Activated naive CD4-positive, alpha-beta T cell treated with anti-CD3 and anti-CD28 coated beads for 36 hours (primary cell): ENCODE measurements at regions of chr7 and their contacts with region 1.

Region 1: GRCh38 chr7:106285051-106285854 is 470 bp upstream of the NAMPT start:
- DNase-seq: peak; percentile 100
- H3K4me3 Mint-ChIP-seq: peak overlapping the region; percentile 92
- H3K27ac Mint-ChIP-seq: peak overlapping the region; percentile 99
- H3K4me1 Mint-ChIP-seq: peaks cover 45% of the 10 kb centered on the region
- H3K27me3 Mint-ChIP-seq: peaks cover under 1% of the 10 kb centered on the region

Region 2: DNA sequence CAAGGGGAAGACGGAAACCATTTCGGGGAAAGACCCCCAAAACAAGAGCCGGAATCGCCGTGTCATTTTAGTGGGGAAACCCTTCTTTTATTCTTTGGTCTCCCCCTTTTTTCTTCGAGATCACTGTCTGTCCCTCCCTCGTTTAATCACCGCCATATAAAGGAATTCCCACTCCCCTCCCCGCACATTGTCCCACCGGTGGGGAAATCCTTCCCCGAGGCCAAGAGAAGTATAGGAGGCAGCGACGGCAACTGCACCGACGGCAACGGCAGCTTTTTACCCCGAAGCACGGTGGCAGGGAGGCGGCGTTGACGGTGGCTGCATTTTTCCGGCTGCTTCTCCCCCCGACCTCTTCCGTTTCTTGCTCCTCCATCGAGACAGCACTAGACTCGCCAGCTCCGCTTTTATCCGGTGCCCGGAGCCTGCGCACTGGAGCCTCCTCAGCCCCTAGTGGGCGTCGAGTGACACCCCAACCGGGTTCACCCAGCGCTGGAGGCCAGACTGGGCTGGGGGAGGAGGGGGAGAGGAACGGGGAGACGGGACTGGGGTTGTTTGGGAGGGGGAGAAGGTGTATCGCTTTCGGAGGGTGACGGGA is 1271.9 kb before region 1 on chr7:
- CTCF ChIA-PET with region 1: no interaction called
- intact Hi-C with region 1: loop called (anchors 1 kb)
- DNase-seq: peak; percentile 94
- H3K4me3 Mint-ChIP-seq: peak overlapping the region; percentile 95
- H3K27ac Mint-ChIP-seq: peak overlapping the region; percentile 99
- H3K4me1 Mint-ChIP-seq: peaks cover 25% of the 10 kb centered on the region
- H3K27me3 Mint-ChIP-seq: no peaks in the 10 kb centered on the region

Region 3: DNA sequence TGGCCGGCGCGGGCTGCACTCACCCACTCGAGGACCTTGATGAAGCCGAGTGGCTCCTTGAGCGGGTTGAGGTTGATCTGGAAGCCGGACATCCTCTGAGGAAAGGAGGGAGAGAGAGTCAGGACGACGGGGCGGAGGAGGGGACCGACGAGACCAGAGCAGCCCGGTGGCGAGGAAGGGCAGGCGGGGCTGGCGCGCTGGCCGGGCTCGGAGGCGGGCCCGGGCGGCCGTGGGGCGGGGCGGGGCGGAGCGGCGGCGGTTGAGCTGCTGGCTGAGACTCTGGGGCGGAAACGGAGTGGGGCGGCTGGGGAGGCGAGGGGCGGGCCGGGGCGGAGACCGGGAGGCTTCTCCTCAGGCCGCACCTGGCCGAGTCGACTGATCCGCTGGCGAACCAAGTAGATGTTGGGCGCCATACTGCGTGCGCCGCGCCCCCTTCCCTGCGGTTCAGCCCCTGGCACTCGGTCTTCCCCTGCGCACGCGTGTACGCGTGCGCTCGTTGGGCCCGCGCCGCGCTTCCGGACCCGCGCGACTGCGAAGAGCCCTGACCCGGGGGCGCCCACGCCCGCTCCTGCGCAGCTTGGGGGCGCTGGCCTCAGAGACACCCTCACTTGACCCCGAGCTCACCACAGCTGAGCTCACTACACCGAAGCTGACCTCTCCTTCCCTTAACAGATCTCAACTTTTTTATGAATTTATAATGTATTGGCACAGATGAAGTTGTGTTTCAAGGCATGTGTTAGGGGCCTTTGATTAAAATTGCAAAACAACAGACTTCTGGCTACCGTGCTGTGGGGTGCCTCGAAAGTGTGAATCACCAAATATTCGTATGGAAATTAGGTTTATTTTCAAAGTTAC is 172.9 kb before region 1 on chr7 and contains the start of gene SYPL1:
- CTCF ChIA-PET with region 1: no interaction called
- intact Hi-C with region 1: loop called (anchors 1 kb)
- DNase-seq: peak; percentile 94
- H3K4me3 Mint-ChIP-seq: peak within 1 kb of the TSS; percentile 85
- H3K27ac Mint-ChIP-seq: peak within 1 kb of the TSS; percentile 92
- H3K4me1 Mint-ChIP-seq: peaks cover 71% of the 10 kb centered on the region
- H3K27me3 Mint-ChIP-seq: no peaks in the 10 kb centered on the region
- total RNA-seq, gene SYPL1: 24.7 to 26.6 TPM

Region 4: GRCh38 chr7:106126170-106126938 is 158.9 kb before region 1 on chr7:
- CTCF ChIA-PET with region 1: no interaction called
- intact Hi-C with region 1: no loop called
- DNase-seq: peak; percentile 85
- H3K4me3 Mint-ChIP-seq: peak overlapping the region; percentile 68
- H3K27ac Mint-ChIP-seq: peak overlapping the region; percentile 20
- H3K4me1 Mint-ChIP-seq: peaks cover 18% of the 10 kb centered on the region
- H3K27me3 Mint-ChIP-seq: no peaks in the 10 kb centered on the region

Region 5: DNA sequence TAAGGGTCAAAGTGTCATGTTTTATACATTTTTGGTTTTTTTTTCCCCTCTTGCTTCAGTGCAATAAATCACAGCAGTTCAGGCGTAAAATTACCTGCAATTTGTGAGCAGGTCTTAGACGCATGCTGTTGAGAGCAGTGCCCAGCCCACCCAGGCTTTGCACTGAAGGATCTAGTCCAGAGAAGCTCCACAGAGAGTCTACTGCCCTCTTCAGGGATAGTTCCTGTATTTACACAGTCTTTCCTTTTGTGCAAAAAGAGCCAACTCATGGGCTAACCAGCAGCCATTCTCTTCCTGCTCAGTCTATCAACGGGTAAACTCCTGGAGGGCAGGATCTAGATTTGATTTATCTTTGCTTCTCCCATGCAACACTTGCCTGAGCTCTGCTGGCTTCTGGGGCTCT is 81.8 kb after region 1 on chr7:
- CTCF ChIA-PET with region 1: interaction called, 4 read pairs
- intact Hi-C with region 1: loop called (anchors 1 kb)
- DNase-seq: no peak
- H3K4me3 Mint-ChIP-seq: no peak overlapping the region
- H3K27ac Mint-ChIP-seq: peak overlapping the region; percentile 70
- H3K4me1 Mint-ChIP-seq: peaks cover 44% of the 10 kb centered on the region
- H3K27me3 Mint-ChIP-seq: peaks cover 23% of the 10 kb centered on the region

Region 6: DNA sequence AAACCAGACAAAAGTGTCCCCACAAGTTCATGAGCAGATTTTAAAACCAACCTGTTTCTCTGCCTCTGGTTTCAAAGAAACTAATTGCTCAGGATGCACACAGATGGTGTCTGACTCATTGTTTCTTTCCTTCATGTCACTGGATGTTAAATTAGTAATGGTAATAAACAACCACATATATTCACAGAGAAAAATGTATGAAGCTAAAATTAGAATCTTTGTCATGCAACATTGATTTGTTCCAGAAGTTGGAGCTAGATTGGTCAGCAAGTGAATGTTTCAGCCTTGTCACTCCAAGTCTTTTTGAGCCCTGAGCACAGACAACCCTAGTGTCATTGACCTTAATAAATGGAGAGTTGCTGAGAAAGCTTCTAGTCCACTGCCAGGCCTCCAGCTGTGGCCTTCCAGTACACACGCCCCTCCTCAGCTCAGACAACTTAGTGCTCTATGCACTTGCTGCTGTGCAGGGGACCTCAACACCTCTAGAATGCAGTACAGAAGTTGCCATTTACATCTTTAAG is 199.8 kb after region 1 on chr7:
- CTCF ChIA-PET with region 1: interaction called, 3 read pairs
- intact Hi-C with region 1: loop called (anchors 1 kb)
- DNase-seq: peak; percentile 26
- H3K4me3 Mint-ChIP-seq: no peak overlapping the region
- H3K27ac Mint-ChIP-seq: peak overlapping the region; percentile 81
- H3K4me1 Mint-ChIP-seq: peaks cover 57% of the 10 kb centered on the region
- H3K27me3 Mint-ChIP-seq: peaks cover 23% of the 10 kb centered on the region

Region 7: DNA sequence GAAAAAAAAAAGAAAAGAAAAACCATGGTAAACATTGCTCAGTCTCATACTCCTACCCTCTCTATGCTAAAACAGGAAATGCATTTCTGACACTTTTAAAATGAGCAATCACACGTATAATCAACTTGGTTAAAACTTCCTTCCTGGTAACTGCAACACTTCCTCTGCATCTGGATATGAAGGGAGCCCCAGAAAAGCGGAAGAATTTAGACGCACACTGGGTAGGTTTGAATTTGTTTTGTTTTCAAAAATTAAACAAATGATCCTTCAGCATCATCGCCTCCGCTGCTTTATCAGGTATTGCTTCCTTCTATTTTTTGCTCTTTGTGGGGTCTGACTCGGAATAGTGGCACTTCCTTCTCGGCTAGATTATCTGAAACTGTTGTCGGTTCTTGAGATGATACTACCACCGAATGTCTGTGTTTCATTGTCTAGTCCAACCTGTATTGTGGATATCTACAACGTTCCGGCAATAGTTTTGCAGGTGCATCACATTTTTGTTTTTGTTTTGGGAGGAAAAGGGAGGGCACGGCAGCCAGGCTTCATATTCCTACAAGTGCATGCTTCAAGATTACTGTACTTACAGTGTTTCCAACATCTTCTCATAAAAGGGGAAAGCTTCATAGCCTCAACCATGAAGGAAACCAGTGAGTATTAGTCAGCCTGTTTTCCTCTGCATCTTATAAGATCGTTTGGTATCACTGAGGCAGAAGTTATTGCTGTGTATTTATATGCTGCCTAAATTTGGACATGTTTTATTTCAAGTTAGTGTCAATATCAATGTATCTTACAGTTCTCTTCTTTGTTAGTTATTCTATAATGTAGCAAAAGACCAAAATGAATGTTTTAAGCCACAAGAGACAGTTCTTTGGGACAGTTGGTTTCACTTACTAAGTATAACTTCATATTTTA is 580.1 kb after region 1 on chr7 and contains the start of gene PIK3CG:
- CTCF ChIA-PET with region 1: no interaction called
- intact Hi-C with region 1: loop called (anchors 10 kb)
- DNase-seq: no peak
- H3K4me3 Mint-ChIP-seq: peak within 1 kb of the TSS; percentile 79
- H3K27ac Mint-ChIP-seq: peak within 1 kb of the TSS; percentile 65
- H3K4me1 Mint-ChIP-seq: peaks cover 77% of the 10 kb centered on the region
- H3K27me3 Mint-ChIP-seq: no peaks in the 10 kb centered on the region
- total RNA-seq, gene PIK3CG: 3.6 to 3.8 TPM